ENCODE measurements at regions of chr11 and their contacts with region 1.

Region 1: DNA sequence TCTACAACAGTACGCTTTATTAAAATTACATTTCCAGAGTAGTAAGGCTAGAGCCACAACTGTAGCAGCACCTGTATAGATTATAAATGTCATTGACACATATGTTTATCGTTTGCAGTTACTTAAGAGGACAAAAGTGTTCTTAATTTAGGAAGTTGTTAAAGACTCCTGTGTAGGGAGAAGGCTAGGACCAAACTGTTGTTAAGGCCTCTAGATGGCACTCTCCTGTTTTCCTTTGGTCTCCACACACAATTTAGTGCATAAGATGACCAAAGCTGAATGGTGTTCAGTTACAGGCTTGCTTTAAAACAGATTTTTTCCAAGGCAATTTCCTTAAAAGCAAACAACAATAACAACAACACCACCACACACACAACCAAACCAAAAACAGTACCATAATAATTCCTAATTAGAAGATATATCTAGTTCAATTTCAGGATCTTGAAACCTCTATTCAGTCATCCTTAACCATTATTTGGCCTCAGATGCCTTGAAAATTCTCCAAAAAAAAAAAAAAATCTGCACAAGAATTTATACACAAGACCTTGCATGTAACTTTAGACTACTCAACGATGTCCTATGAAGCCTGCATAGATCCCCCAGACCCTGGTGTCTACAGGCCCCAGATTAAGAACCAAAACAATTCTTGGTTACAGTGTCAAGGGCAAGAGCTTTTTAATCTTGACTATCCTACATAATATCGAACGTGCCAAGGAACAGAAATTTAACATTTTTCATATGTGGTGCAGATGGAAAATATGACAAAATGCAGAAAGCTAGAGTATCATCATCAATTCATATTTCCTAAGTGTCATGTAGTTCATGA is 42.6 kb upstream of the APOA1 start:
- DNase-seq: peak; percentile 71
- ATAC-seq: peak; percentile 49
- H3K4me3 ChIP-seq: no peak overlapping the region
- H3K4me3 Mint-ChIP-seq: no peak overlapping the region
- H3K27ac ChIP-seq: no peak overlapping the region
- H3K27ac Mint-ChIP-seq: no peak overlapping the region
- H3K4me1 ChIP-seq: no peaks in the 10 kb centered on the region
- H3K4me1 Mint-ChIP-seq: peaks cover 10% of the 10 kb centered on the region
- H3K27me3 ChIP-seq: no peaks in the 10 kb centered on the region
- H3K27me3 Mint-ChIP-seq: no peaks in the 10 kb centered on the region
- CTCF ChIP-seq: peak; percentile 75

Region 2: DNA sequence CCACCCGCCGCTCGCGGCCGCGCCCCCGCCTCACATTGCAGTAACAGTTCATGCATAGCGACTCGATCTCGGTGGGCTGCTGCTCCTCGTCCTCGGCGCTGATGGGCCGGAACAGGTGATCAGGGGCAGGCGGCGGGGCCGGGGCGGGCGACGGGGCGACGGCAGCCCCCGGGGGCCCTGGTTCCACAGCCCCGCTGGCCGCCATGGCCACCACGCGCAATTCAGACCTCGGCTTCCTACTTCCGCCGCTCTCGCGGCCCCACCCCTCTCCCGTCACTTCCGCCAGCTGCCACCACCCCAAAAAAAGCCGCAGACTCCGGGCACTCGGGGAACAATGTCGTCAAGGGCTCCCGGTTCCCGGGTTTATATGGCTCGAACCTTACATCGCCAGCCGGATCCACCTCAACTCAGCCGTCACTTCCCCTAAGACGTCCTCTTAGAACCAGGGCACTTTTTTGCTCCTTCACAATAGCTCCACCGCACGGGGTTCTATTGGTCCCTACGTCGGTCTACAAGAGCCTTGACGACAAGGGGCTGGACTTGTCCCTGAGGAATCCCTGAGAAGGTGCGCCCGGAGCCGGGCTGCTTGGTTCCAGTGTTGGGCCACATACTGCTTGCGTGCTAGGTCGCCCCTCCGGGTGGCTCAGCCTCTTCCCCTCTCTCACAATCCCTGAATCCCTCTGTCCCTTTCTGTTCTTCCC is 92.1 kb before region 1 on chr11 and contains the start of gene ZPR1:
- CTCF ChIA-PET with region 1: interaction called, 10 read pairs
- POLR2A ChIA-PET with region 1: no interaction called
- intact Hi-C with region 1: loop called (anchors 10 kb)
- DNase-seq: peak; percentile 88
- ATAC-seq: peak; percentile 83
- H3K4me3 ChIP-seq: peak within 1 kb of the TSS; percentile 69 to 88 (median 81)
- H3K4me3 Mint-ChIP-seq: peak within 1 kb of the TSS; percentile 98
- H3K27ac ChIP-seq: peak within 1 kb of the TSS; percentile 47 to 82
- H3K27ac Mint-ChIP-seq: peak within 1 kb of the TSS; percentile 98
- H3K4me1 ChIP-seq: peaks cover 22 to 29% of the 10 kb centered on the region in 2 donors
- H3K4me1 Mint-ChIP-seq: peaks cover 37% of the 10 kb centered on the region
- H3K27me3 ChIP-seq: peaks cover 0 to 10% (median 0%) of the 10 kb centered on the region in 4 experiments
- H3K27me3 Mint-ChIP-seq: peaks cover 7% of the 10 kb centered on the region
- CTCF ChIP-seq: no peak
- total RNA-seq, gene ZPR1: 63.1 and 63.7 TPM in 2 replicates

Region 3: GRCh38 chr11:116895048-116895757 is 15.2 kb after region 1 on chr11:
- CTCF ChIA-PET with region 1: interaction called, 11 read pairs
- POLR2A ChIA-PET with region 1: no interaction called
- intact Hi-C with region 1: loop called (anchors 2 kb)
- DNase-seq: peak; percentile 64
- ATAC-seq: peak; percentile 63
- H3K4me3 ChIP-seq: no peak overlapping the region
- H3K4me3 Mint-ChIP-seq: no peak overlapping the region
- H3K27ac ChIP-seq: peak overlapping the region in 1 of 2 donors; percentile 51
- H3K27ac Mint-ChIP-seq: peak overlapping the region; percentile 34
- H3K4me1 ChIP-seq: peaks cover 0 to 5% of the 10 kb centered on the region in 2 donors
- H3K4me1 Mint-ChIP-seq: peaks cover 13% of the 10 kb centered on the region
- H3K27me3 ChIP-seq: no peaks in the 10 kb centered on the region
- H3K27me3 Mint-ChIP-seq: no peaks in the 10 kb centered on the region
- CTCF ChIP-seq: peak; percentile 20

Region 4: DNA sequence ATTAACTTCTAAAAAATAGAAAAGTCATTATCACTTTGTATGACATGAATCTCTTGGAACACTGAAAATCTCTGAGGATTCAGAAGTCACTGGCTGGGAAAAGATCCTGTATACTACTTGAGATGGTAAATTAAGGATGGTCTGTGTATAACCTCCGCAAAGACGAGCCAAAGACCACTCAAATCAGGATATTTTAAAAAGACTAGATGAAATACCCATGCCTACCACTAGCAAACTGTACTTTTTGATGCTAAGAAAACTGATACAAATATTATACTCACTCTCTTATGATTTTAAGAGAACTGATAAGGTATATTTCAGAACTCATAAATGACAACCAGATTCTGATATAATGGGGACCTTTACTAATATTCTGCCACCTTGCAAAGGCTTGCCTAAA is 36.0 kb after region 1 on chr11:
- CTCF ChIA-PET with region 1: interaction called, 10 read pairs
- POLR2A ChIA-PET with region 1: no interaction called
- intact Hi-C with region 1: no loop called
- DNase-seq: no peak
- ATAC-seq: no peak
- H3K4me3 ChIP-seq: no peak overlapping the region
- H3K4me3 Mint-ChIP-seq: no peak overlapping the region
- H3K27ac ChIP-seq: no peak overlapping the region
- H3K27ac Mint-ChIP-seq: no peak overlapping the region
- H3K4me1 ChIP-seq: peaks cover 11 to 13% of the 10 kb centered on the region in 2 donors
- H3K4me1 Mint-ChIP-seq: peaks cover 31% of the 10 kb centered on the region
- H3K27me3 ChIP-seq: no peaks in the 10 kb centered on the region
- H3K27me3 Mint-ChIP-seq: no peaks in the 10 kb centered on the region
- CTCF ChIP-seq: no peak

Region 5: GRCh38 chr11:117226388-117227385 is 346.7 kb after region 1 on chr11:
- CTCF ChIA-PET with region 1: interaction called, 19 read pairs
- POLR2A ChIA-PET with region 1: no interaction called
- intact Hi-C with region 1: loop called (anchors 1 kb)
- DNase-seq: peak; percentile 86
- ATAC-seq: peak; percentile 70
- H3K4me3 ChIP-seq: no peak overlapping the region
- H3K4me3 Mint-ChIP-seq: no peak overlapping the region
- H3K27ac ChIP-seq: no peak overlapping the region
- H3K27ac Mint-ChIP-seq: peak overlapping the region; percentile 74
- H3K4me1 ChIP-seq: peaks cover 26 to 37% of the 10 kb centered on the region in 2 donors
- H3K4me1 Mint-ChIP-seq: peaks cover 35% of the 10 kb centered on the region
- H3K27me3 ChIP-seq: no peaks in the 10 kb centered on the region
- H3K27me3 Mint-ChIP-seq: no peaks in the 10 kb centered on the region
- CTCF ChIP-seq: peak; percentile 84